HepG2 (cell line): ENCODE measurements at regions of chr2 and their contacts with region 1.

Region 1: DNA sequence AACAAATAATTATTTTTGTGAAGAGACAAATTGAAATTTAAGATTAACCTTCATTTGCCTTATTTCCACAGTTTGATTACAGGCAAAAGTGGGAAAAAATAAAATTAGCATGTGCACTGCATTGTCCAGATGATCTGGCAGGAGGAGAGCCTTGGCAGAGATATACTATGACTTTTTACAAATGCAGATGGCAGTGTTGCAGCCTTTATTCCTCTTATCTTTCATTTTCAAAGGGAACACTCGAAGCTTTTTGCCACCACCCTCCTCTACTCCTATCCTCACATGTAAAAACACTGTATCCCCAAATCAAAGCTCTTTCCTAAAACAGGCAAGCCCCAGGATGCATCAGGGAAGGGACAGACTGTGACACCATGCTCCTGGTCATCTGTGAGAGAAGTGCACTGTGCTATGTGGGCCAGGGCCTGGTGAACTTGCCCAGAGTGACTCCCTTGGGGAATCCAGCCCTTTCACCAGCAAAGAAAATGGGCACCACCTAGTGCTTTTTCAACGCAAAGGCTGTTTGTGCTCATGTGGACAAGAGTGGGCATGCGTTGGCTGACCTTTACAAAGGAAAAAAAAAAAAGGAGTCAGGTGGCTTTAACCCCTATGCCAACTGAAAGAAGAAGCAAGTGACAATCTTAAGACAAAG is 74.7 kb upstream of the ETAA1 start:
- DNase-seq: peak; percentile 65
- ATAC-seq: peak; percentile 100
- H3K4me3 ChIP-seq: no peak overlapping the region
- H3K27ac ChIP-seq: no peak overlapping the region
- H3K4me1 ChIP-seq: no peaks in the 10 kb centered on the region
- H3K27me3 ChIP-seq: no peaks in the 10 kb centered on the region
- CTCF ChIP-seq: peak; percentile 83
- EP300 ChIP-seq: no peak
- POLR2A ChIP-seq: no peak
- RAD21 ChIP-seq: peak; percentile 75

Region 2: DNA sequence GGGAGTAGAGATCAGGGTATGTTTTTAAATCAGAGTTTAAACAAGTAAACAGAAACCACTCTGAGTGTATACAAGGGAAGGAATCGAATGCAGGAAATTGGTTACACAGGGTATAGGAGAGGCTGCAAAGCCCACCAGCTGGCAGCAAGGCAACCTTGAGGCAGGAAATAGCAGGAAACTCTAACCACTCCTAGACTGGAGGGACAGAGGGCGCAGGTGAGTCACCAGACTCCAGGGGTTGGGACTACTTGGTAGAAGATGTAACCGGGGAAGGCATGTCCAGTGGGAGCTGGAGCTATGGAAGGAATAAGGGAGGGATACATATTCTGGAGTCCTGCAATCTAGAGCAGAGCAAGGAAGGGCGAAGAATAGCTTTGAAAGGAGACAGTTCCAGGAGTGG is 735.3 kb before region 1 on chr2:
- CTCF ChIA-PET with region 1: no interaction called
- POLR2A ChIA-PET with region 1: no interaction called
- in situ Hi-C with region 1: no loop called
- intact Hi-C with region 1: loop called (anchors 2 kb)
- DNase-seq: peak; percentile 52
- ATAC-seq: peak; percentile 97
- H3K4me3 ChIP-seq: no peak overlapping the region
- H3K27ac ChIP-seq: no peak overlapping the region
- H3K4me1 ChIP-seq: no peaks in the 10 kb centered on the region
- H3K27me3 ChIP-seq: peaks cover 1 to 16% of the 10 kb centered on the region in 2 experiments; a peak in 3 of 5 replicates
- CTCF ChIP-seq: peak; percentile 77
- EP300 ChIP-seq: no peak
- POLR2A ChIP-seq: no peak
- RAD21 ChIP-seq: peak; percentile 69

Region 3: DNA sequence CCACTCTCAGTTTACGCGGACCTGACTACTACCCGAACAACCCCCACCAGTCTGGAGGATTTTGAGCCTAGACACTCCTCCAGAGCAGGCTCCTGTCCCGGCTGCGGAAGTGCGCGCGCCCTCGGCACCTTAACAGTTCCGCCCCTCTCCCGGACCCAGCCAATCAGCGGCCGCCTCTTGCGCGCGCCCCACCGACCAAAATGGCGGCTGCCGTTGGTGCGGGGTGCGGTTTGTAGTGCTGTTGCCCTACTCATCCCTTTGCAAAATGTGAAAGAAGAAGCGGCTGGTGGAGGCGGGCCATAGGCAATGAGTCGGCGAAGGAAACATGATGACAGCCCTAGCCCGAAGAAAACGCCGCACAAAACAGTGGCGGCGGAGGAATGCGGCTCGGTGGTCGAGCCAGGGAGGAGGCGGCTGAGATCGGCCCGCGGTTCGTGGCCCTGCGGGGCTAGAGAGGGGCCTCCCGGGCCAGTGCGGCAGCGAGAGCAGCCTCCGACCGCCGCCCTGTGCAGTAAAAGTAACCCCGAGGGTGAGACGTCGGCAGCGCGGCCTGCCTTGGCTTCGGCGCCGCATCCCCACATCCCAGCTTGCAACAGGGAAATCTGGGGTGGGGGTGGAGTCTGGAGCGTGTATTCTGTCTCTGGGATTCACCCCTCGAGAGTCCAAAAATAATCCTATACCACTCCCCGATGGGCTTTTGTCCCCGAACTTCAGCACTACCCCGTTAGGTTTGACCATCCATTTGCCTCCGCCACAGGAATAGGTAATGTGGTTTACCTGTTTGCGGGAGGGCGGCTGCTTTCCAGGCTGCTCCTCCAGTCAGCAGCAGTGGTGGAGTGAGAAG is 74.9 kb after region 1 on chr2 and contains the start of gene ETAA1:
- CTCF ChIA-PET with region 1: no interaction called
- POLR2A ChIA-PET with region 1: no interaction called
- in situ Hi-C with region 1: no loop called
- intact Hi-C with region 1: loop called (anchors 10 kb)
- DNase-seq: peak; percentile 87
- ATAC-seq: peak; percentile 100
- H3K4me3 ChIP-seq: peak within 1 kb of the TSS; percentile 86 to 91 (median 86)
- H3K27ac ChIP-seq: peak within 1 kb of the TSS; percentile 71
- H3K4me1 ChIP-seq: peaks cover 29% of the 10 kb centered on the region
- H3K27me3 ChIP-seq: no peaks in the 10 kb centered on the region; a peak in 1 of 5 replicates
- CTCF ChIP-seq: no peak
- EP300 ChIP-seq: no peak
- POLR2A ChIP-seq: peak; percentile 73 to 90
- RAD21 ChIP-seq: 0 out of 2 replicates have a peak, but pooled peaks have one; percentile 26
- total RNA-seq, gene ETAA1: 16.2 and 20.7 TPM in 2 replicates